Gastrocnemius medialis (tissue), 4 donors: ENCODE measurements at regions of chr10 and their contacts with region 1.

Region 1: DNA sequence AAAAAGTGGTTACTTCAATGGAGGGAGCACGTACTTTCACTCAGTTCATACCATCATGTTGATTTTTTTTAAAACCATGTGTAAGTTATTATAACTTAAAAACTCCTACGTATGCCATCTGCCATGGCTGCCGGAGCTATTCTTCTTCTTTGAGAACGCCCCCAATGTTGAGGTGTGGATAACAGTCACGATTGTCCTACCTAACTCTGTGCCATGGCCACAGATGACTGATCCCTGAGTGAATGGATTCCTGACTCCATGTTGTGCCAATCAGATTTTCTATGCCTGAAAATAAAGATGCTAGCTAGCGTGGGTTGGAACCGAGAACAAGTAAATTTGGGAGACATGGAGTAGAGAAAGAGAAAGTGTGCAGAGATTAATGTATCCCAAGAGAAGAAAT is 5.3 kb downstream of the MCMBP start:
- DNase-seq: no peak
- ATAC-seq: no peak
- H3K4me3 ChIP-seq: no peak overlapping the region
- H3K27ac ChIP-seq: no peak overlapping the region
- H3K4me1 ChIP-seq: peaks cover 12 to 20% of the 10 kb centered on the region in 2 donors
- H3K27me3 ChIP-seq: no peaks in the 10 kb centered on the region
- CTCF ChIP-seq: no peak
- POLR2A ChIP-seq: no peak

Region 2: GRCh38 chr10:119852822-119853221 is 14.5 kb before region 1 on chr10:
- in situ Hi-C with region 1: no loop called
- intact Hi-C with region 1: loop called (anchors 2 kb)
- DNase-seq: no peak
- ATAC-seq: no peak
- H3K4me3 ChIP-seq: no peak overlapping the region
- H3K27ac ChIP-seq: no peak overlapping the region
- H3K4me1 ChIP-seq: peaks cover 6 to 14% of the 10 kb centered on the region in 2 donors
- H3K27me3 ChIP-seq: no peaks in the 10 kb centered on the region
- CTCF ChIP-seq: no peak
- POLR2A ChIP-seq: no peak